Activated CD8-positive, alpha-beta T cell treated with anti-CD3 and anti-CD28 coated beads for 36 hours (primary cell): ENCODE measurements at regions of chr16 and their contacts with region 1.

Region 1: GRCh38 chr16:3123986-3124886 is 10.6 kb upstream of the ZNF213 start:
- DNase-seq: peak; percentile 99
- ATAC-seq: peak; percentile 92
- H3K4me3 Mint-ChIP-seq: peak overlapping the region; percentile 98
- H3K27ac Mint-ChIP-seq: peak overlapping the region; percentile 94
- H3K4me1 Mint-ChIP-seq: peaks cover 37% of the 10 kb centered on the region
- H3K27me3 Mint-ChIP-seq: no peaks in the 10 kb centered on the region
- CTCF ChIP-seq: peak; percentile 52

Region 2: GRCh38 chr16:2948807-2949738 is 175.2 kb before region 1 on chr16:
- CTCF ChIA-PET with region 1: no interaction called
- POLR2A ChIA-PET with region 1: no interaction called
- intact Hi-C with region 1: no loop called
- DNase-seq: no peak
- ATAC-seq: no peak
- H3K4me3 Mint-ChIP-seq: no peak overlapping the region
- H3K27ac Mint-ChIP-seq: no peak overlapping the region
- H3K4me1 Mint-ChIP-seq: no peaks in the 10 kb centered on the region
- H3K27me3 Mint-ChIP-seq: no peaks in the 10 kb centered on the region
- CTCF ChIP-seq: no peak

Region 3: DNA sequence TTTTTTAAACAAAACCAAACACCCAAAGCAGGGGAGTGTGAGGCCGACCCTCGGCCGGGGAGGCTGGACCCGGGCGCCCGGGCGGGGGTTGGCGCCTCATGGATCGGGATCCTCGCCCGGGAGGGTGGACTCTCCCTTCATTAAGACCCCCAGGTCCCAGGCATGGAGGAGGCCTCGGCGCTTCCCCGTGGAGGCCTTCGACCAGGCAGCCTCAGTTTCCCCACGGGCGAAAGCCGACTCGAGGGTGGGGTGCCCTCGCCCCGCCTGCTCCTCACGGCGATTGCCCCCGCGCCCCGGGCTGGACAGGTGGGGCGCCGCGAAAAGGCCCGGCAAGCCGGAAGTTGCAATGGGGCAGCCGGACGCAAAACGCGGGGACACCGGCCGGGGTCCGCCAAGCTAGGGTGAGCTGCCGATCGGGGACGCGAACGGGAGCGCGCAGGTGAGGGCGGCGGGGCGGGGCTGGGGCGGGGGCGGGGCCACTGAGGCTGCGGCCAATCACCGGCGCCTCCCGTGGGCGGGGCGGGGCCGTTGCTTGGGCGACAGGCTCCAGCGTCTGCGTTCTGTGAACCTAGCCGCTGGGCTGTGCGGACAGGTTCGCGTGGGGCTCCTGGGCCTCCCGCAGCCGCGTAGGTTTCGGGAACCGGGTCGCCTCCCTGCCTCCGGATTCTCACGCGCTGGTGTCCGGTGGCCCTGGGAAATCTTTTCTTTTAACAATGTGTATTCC is 17.9 kb before region 1 on chr16:
- CTCF ChIA-PET with region 1: interaction called, 376 read pairs
- POLR2A ChIA-PET with region 1: interaction called, 6 read pairs
- intact Hi-C with region 1: no loop called
- DNase-seq: peak; percentile 96
- ATAC-seq: peak; percentile 96
- H3K4me3 Mint-ChIP-seq: peak overlapping the region; percentile 79
- H3K27ac Mint-ChIP-seq: peak overlapping the region; percentile 92
- H3K4me1 Mint-ChIP-seq: peaks cover 13% of the 10 kb centered on the region
- H3K27me3 Mint-ChIP-seq: no peaks in the 10 kb centered on the region
- CTCF ChIP-seq: no peak

Region 4: GRCh38 chr16:3190949-3191353 is 66.7 kb after region 1 on chr16:
- CTCF ChIA-PET with region 1: no interaction called
- POLR2A ChIA-PET with region 1: no interaction called
- intact Hi-C with region 1: no loop called
- DNase-seq: no peak
- ATAC-seq: no peak
- H3K4me3 Mint-ChIP-seq: peak overlapping the region; percentile 73
- H3K27ac Mint-ChIP-seq: peak overlapping the region; percentile 34
- H3K4me1 Mint-ChIP-seq: peaks cover 38% of the 10 kb centered on the region
- H3K27me3 Mint-ChIP-seq: peaks cover 71% of the 10 kb centered on the region
- CTCF ChIP-seq: no peak

Region 5: DNA sequence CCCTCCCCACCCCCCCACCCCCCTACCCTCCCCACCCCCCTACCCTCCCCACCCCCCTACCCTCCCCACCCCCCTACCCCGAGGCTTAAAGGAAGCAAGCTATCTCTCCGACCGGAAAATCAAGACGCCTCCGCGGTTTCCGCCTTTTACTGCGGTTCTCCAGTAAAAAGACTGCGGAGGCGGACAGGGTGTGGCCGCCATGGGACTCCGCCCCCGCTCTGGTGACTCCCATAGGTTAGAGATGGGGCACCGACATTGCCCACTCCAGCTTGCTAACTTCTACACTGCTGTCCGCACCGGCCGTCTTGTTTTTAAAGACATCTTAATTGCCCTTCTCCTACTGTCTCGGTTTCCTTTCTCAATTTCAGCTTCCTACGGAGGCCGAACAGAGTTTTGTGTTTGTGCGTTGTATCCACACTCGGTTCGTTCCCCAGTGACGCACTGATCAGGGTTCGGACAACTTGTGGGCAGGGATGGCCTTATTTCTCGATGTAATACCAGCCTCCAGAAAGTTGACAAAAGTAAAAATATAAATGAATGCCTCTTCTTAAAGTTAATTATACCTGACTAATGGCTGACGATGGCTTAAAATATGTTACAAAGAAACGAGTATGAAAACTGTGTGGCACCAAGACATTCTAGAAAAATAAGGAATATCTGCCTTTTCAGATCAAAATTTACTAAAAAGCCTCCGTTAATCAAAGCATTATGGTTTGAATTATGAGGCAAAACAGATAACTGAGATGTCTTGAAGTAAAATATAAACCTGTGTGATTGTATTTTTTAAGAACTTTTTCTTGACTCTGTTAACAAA is 111.8 kb after region 1 on chr16:
- CTCF ChIA-PET with region 1: no interaction called
- POLR2A ChIA-PET with region 1: no interaction called
- intact Hi-C with region 1: no loop called
- DNase-seq: peak; percentile 81
- ATAC-seq: no peak
- H3K4me3 Mint-ChIP-seq: peak overlapping the region; percentile 67
- H3K27ac Mint-ChIP-seq: peak overlapping the region; percentile 82
- H3K4me1 Mint-ChIP-seq: peaks cover 34% of the 10 kb centered on the region
- H3K27me3 Mint-ChIP-seq: no peaks in the 10 kb centered on the region
- CTCF ChIP-seq: no peak